H1 (cell line): ENCODE measurements at regions of chr9 and their contacts with region 1.

Region 1: GRCh38 chr9:112887381-112887780 is 3.3 kb downstream of the SLC46A2 start:
- DNase-seq: peak; percentile 34 to 85
- H3K4me3 ChIP-seq: no peak overlapping the region
- H3K27ac ChIP-seq: no peak overlapping the region
- H3K4me1 ChIP-seq: peaks cover 0 to 8% (median 4%) of the 10 kb centered on the region in 4 experiments; a peak in 4 of 7 replicates
- H3K27me3 ChIP-seq: peaks cover 14 to 34% (median 28%) of the 10 kb centered on the region in 4 experiments
- CTCF ChIP-seq: peak; percentile 91 to 97 (median 96)
- EP300 ChIP-seq: no peak
- POLR2A ChIP-seq: no peak
- RAD21 ChIP-seq: peak; percentile 88 to 91

Region 2: GRCh38 chr9:112844771-112845542 is 42.4 kb before region 1 on chr9:
- CTCF ChIA-PET with region 1: interaction called, 76 read pairs
- POLR2A ChIA-PET with region 1: no interaction called
- DNase-seq: peak in 1 of 2 experiments; percentile 95
- H3K4me3 ChIP-seq: no peak overlapping the region
- H3K27ac ChIP-seq: no peak overlapping the region
- H3K4me1 ChIP-seq: peaks cover 7 to 19% (median 13%) of the 10 kb centered on the region in 4 experiments
- H3K27me3 ChIP-seq: no peaks in the 10 kb centered on the region
- CTCF ChIP-seq: peak; percentile 85 to 92 (median 91)
- EP300 ChIP-seq: no peak
- POLR2A ChIP-seq: no peak
- RAD21 ChIP-seq: peak; percentile 78 to 86

Region 3: DNA sequence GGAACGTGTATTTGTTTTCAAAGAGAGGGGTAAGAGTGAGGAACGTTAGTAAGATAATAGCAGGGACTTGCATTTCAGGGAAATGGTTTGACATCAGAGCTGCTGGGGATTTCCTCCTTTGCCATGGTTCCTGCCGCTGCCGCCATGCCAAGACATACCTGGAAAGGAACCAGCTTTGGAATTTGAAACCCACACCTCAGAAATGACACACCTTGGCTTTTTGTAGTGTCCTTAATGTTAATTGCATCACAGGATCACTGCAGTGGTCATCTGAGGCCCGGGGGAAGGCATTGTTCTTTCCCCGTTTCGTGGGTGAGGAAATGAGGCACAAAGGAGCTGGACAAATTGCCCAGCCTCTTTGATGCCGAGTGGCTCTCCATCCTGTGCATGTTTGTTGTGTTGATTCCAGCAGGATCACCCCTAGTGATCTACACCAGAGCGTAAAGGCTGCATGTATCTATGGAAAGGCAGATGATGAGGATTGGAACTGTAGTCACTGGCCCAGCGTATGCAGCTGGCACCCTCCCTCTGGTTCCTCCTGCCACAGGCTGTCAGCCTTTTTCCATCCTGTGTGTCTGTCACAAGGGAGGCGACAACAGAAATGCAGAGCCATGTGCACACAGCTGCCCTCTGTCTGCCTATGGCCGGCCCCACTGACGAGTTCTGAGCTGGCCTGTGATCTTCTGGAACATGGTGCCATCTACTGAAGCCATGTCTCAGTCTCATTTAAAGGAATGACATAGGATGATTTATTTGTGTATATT is 34.5 kb before region 1 on chr9:
- CTCF ChIA-PET with region 1: interaction called, 51 read pairs
- POLR2A ChIA-PET with region 1: interaction called, 3 read pairs
- DNase-seq: no peak
- H3K4me3 ChIP-seq: no peak overlapping the region
- H3K27ac ChIP-seq: no peak overlapping the region
- H3K4me1 ChIP-seq: peaks cover 0 to 10% (median 9%) of the 10 kb centered on the region in 4 experiments; a peak in 6 of 7 replicates
- H3K27me3 ChIP-seq: no peaks in the 10 kb centered on the region
- CTCF ChIP-seq: no peak
- EP300 ChIP-seq: no peak
- POLR2A ChIP-seq: no peak
- RAD21 ChIP-seq: no peak

Region 4: DNA sequence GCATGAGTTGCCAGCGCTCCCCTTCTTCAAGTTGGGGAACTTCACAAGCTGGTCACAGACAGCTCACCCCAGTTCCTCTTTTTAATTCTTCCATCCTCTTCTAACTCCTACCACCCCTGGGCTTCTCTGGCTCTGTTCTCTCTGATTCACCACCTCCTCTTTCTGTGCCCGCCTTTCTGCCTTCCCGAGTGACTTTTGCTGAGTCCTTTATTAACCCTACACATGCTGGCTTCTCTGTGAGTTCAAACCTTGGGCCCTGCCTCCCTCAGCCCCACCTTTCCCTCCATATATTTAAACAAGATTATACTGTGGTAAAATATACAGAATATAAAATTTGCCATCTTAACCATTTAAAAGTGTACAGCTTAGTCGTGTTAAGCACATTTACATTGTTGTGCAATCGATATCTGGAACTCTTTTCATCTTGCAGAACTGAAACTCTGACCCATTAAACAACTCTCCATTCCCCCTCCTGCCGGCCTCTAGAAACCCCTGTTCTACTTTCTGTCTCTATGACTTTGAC is 28.7 kb before region 1 on chr9:
- CTCF ChIA-PET with region 1: interaction called, 51 read pairs
- POLR2A ChIA-PET with region 1: interaction called, 3 read pairs
- DNase-seq: no peak
- H3K4me3 ChIP-seq: no peak overlapping the region
- H3K27ac ChIP-seq: no peak overlapping the region
- H3K4me1 ChIP-seq: no peaks in the 10 kb centered on the region
- H3K27me3 ChIP-seq: no peaks in the 10 kb centered on the region
- CTCF ChIP-seq: no peak
- EP300 ChIP-seq: no peak
- POLR2A ChIP-seq: no peak
- RAD21 ChIP-seq: no peak

Region 5: DNA sequence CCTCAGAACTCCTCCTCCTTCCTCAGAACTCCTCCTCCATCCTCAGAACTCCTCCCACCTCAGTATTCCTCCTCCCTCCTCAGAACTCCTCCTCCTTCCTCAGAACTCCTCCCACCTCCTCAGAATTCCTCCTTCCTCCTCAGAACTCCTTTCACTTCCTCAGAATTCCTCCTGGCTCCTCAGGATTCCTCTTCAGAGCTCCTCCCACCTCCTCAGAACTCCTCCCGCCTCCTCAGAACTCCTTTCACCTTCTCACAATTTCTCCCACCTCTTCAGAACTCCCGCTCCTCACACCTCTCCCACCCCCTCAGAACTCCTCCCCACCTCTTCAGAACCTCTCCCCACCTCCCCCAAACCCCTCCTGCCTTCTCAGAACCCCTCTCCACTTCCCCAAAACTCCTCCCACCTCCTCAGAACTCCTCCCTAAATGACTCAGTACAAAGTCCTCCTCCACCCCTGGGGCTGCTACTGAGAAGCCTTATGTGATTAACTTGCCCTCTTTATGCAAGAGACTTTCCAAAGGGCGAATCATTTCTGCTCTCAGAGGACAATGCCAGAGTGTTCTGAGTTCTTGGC is 19.9 kb before region 1 on chr9:
- CTCF ChIA-PET with region 1: interaction called, 11 read pairs
- POLR2A ChIA-PET with region 1: no interaction called
- DNase-seq: no peak
- H3K4me3 ChIP-seq: no peak overlapping the region
- H3K27ac ChIP-seq: no peak overlapping the region
- H3K4me1 ChIP-seq: peaks cover 0 to 6% (median 1%) of the 10 kb centered on the region in 4 experiments; a peak in 2 of 7 replicates
- H3K27me3 ChIP-seq: no peaks in the 10 kb centered on the region
- CTCF ChIP-seq: no peak
- EP300 ChIP-seq: no peak
- POLR2A ChIP-seq: no peak
- RAD21 ChIP-seq: no peak

Region 6: GRCh38 chr9:112873773-112874405 is 13.5 kb before region 1 on chr9:
- CTCF ChIA-PET with region 1: interaction called, 56 read pairs
- POLR2A ChIA-PET with region 1: interaction called, 3 read pairs
- DNase-seq: no peak
- H3K4me3 ChIP-seq: no peak overlapping the region
- H3K27ac ChIP-seq: no peak overlapping the region
- H3K4me1 ChIP-seq: peaks cover 0 to 6% (median 0%) of the 10 kb centered on the region in 4 experiments; a peak in 1 of 7 replicates
- H3K27me3 ChIP-seq: no peaks in the 10 kb centered on the region
- CTCF ChIP-seq: no peak
- EP300 ChIP-seq: no peak
- POLR2A ChIP-seq: no peak
- RAD21 ChIP-seq: no peak

Region 7: DNA sequence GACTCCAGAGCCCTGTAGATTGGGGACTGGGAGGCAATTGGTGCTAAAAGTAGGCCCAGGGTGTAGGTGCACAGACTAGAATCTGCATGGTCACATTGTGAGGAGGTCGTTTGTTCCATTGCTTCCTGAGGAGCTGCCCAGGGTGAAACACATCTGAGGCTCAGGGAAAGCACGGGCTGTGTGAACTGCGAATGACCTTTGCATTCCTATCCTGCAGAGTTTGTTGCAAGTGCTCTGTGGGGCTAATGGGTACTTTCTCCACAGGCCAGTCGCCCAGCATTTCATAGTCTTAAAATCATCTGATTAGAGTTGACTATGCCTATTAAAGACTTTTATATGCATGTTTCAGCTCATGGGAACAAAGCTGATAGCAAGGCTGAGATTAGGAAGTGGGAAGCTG is 17.7 kb after region 1 on chr9:
- CTCF ChIA-PET with region 1: interaction called, 37 read pairs
- POLR2A ChIA-PET with region 1: no interaction called
- DNase-seq: no peak
- H3K4me3 ChIP-seq: no peak overlapping the region
- H3K27ac ChIP-seq: no peak overlapping the region
- H3K4me1 ChIP-seq: no peaks in the 10 kb centered on the region
- H3K27me3 ChIP-seq: no peaks in the 10 kb centered on the region; a peak in 1 of 7 replicates
- CTCF ChIP-seq: no peak
- EP300 ChIP-seq: no peak
- POLR2A ChIP-seq: no peak
- RAD21 ChIP-seq: no peak